Gastrocnemius medialis (tissue), 4 donors: ENCODE measurements at regions of chr3 and their contacts with region 1.

Region 1: DNA sequence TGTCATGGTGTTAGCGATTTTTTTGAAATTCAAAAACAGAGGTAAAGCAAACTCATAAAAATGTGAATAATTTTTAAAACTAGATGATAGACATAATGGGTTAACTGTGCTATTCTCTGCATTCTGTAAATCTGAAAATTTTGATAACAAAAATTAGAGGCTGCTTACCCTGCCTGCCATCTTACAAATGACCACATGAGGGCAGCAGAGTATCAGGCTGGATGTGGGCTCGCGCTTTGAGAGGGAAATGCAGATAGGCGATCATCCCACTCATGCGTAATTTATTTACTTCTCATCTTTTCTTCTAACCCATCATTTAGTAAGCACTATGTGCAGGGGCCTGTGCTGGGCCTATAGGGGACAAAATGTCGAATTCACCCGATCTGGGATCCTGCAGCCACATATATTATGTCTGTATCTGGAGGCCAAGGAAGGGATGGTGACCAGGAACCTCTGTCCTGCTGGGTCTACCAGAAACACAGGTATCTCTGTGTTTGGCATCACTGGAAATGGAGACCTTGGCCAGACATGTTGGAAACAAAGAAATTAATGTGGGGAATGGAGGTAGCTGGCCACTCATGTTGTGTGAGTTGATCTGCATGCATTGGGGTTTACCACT is 7.8 kb upstream of the RAD18 start:
- DNase-seq: peak in 1 of 2 donors; percentile 36
- ATAC-seq: peak; percentile 57 to 69
- H3K4me3 ChIP-seq: no peak overlapping the region
- H3K27ac ChIP-seq: no peak overlapping the region
- H3K4me1 ChIP-seq: no peaks in the 10 kb centered on the region
- H3K27me3 ChIP-seq: no peaks in the 10 kb centered on the region
- CTCF ChIP-seq: peak; percentile 88 to 99 (median 95)
- POLR2A ChIP-seq: no peak

Region 2: GRCh38 chr3:9078561-9079240 is 107.6 kb after region 1 on chr3:
- in situ Hi-C with region 1: loop called in 1 of 4 experiments (anchors 10 kb)
- intact Hi-C with region 1: no loop called
- DNase-seq: no peak
- ATAC-seq: no peak
- H3K4me3 ChIP-seq: no peak overlapping the region
- H3K27ac ChIP-seq: no peak overlapping the region
- H3K4me1 ChIP-seq: no peaks in the 10 kb centered on the region
- H3K27me3 ChIP-seq: no peaks in the 10 kb centered on the region
- CTCF ChIP-seq: no peak
- POLR2A ChIP-seq: no peak